Naive thymus-derived CD4-positive, alpha-beta T cell (primary cell): ENCODE measurements at regions of chr21 and their contacts with region 1.

Region 1: DNA sequence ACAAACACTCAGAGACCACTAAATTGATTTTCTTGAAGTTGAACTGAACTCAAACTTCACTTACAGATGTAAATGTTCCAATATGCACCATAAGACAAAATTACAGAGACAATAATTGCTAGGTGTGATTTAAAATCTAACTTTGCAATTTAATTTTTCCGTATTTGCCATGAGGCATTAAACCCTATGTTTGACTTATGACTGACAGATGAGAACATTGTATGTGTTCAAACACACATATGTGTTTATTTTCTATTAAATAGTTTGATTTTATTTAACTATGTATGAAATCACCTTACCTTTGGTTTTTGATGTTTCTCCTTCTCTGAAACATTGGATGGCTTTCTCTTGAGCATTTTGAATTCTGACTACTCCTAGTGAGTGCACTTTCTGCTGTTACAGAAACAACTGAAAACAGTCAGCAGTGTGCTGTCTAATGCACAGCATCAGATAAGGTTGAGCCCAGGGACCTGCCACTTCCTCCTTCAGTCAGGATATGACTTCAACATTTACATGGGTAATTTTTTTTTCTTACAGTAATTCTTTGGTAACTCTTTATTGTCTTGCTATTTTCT is at the start of gene SAMSN1:
- DNase-seq: peak in 8 of 9 donors; percentile 62 to 84 (median 78)
- ATAC-seq: peak; percentile 93
- H3K4me3 ChIP-seq: peak within 1 kb of the TSS; percentile 78
- H3K4me3 Mint-ChIP-seq: peak within 1 kb of the TSS; percentile 81 to 99 (median 93)
- H3K27ac ChIP-seq: peak within 1 kb of the TSS; percentile 82
- H3K27ac Mint-ChIP-seq: peak within 1 kb of the TSS; percentile 81 to 97 (median 93)
- H3K4me1 ChIP-seq: peaks cover 43 to 50% of the 10 kb centered on the region in 2 donors
- H3K4me1 Mint-ChIP-seq: peaks cover 31 to 79% (median 67%) of the 10 kb centered on the region in 7 donors
- H3K27me3 ChIP-seq: no peaks in the 10 kb centered on the region
- H3K27me3 Mint-ChIP-seq: no peaks in the 10 kb centered on the region
- total RNA-seq, gene SAMSN1: 27.5 to 136 (median 38.0) TPM

Region 2: DNA sequence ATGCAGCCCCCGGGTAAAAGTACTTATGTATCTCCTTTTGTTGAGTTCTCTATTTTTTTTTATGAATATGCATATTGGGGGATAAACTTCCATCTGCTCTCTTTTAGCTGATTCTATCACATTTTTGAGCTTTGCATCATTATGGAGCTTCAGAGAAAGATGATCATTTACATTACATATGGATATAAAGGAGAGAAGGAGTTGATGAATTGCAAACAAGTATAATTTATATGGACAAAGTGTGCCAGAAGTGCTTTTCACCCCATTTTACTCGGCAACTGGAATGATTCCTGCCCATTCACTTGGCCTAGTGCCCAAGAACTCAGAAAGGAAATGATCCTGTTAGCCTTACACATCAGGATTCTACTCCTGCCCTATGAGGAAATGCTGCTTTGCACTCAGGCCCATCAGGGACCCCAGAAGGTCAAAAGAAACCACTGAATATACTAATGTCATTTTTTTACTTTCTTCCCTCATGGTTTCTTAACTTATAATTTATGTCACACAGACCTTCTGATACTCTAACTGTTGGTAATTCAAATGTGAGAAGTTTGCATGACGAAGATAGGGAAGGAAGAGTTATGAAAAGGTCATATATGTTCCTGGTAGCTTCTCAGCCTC is 65.5 kb before region 1 on chr21:
- CTCF ChIA-PET with region 1: no interaction called
- POLR2A ChIA-PET with region 1: no interaction called
- intact Hi-C with region 1: no loop called
- DNase-seq: no peak
- ATAC-seq: peak; percentile 29
- H3K4me3 ChIP-seq: no peak overlapping the region
- H3K4me3 Mint-ChIP-seq: no peak overlapping the region
- H3K27ac ChIP-seq: no peak overlapping the region
- H3K27ac Mint-ChIP-seq: peak overlapping the region in 2 of 9 donors; percentile 21 to 90
- H3K4me1 ChIP-seq: peaks cover 0 to 13% of the 10 kb centered on the region in 2 donors
- H3K4me1 Mint-ChIP-seq: peaks cover 8 to 53% (median 15%) of the 10 kb centered on the region in 7 donors
- H3K27me3 ChIP-seq: no peaks in the 10 kb centered on the region
- H3K27me3 Mint-ChIP-seq: no peaks in the 10 kb centered on the region

Region 3: GRCh38 chr21:14492931-14493330 is 53.1 kb before region 1 on chr21:
- CTCF ChIA-PET with region 1: no interaction called
- POLR2A ChIA-PET with region 1: no interaction called
- intact Hi-C with region 1: loop called in 1 of 2 experiments (anchors 2 kb)
- DNase-seq: no peak
- ATAC-seq: no peak
- H3K4me3 ChIP-seq: no peak overlapping the region
- H3K4me3 Mint-ChIP-seq: no peak overlapping the region
- H3K27ac ChIP-seq: no peak overlapping the region
- H3K27ac Mint-ChIP-seq: peak overlapping the region in 2 of 9 donors; percentile 5 to 18
- H3K4me1 ChIP-seq: no peaks in the 10 kb centered on the region
- H3K4me1 Mint-ChIP-seq: peaks cover 7 to 57% (median 16%) of the 10 kb centered on the region in 7 donors
- H3K27me3 ChIP-seq: no peaks in the 10 kb centered on the region
- H3K27me3 Mint-ChIP-seq: no peaks in the 10 kb centered on the region

Region 4: DNA sequence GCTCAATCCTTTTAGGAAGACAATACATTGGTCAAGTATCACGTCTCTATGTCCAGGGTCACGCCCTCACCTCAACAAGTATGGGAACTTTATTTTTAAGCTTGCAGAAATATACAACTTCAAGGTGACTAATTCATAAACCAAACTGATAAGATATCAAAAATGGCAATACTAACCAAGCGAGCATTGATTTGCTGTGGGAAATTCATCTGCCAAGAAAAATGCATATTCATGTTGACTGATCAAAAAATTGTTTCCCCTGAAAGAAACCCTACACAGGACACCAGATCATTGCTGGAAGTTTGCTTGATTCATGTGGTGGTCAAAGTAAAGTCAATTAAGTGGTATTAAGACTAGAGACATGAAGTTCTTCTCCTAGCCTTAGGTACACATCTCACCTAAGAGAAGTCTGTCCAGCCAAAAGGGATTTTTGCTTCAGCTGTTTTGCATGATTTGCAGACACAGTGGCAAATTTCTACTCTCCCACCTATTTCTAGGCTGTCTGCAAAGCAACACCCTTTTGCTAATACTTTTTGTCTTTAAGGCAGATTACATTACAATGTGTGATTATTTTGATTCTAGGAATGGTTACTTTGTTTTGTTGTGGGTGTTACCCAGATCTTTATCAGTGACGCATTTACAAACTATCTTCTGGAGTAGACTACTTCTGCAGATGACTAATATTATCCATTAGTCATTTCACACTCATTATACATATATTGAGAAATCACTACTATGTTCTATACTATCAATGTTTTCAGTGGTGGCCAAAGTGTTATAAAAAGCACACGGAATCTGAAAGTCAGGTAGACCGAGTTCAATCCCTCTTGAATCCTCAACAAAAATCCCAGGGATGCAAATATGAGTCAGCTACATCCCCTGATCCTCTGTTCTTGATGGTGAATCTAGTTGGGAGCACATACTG is 12.2 kb before region 1 on chr21:
- CTCF ChIA-PET with region 1: interaction called, 8 read pairs
- POLR2A ChIA-PET with region 1: interaction called, 6 read pairs
- intact Hi-C with region 1: loop called (anchors 1 kb)
- DNase-seq: peak in 3 of 9 donors; percentile 15 to 49 (median 22)
- ATAC-seq: peak; percentile 88
- H3K4me3 ChIP-seq: peak overlapping the region; percentile 22
- H3K4me3 Mint-ChIP-seq: peak overlapping the region in 8 of 10 donors; percentile 3 to 85 (median 47)
- H3K27ac ChIP-seq: no peak overlapping the region
- H3K27ac Mint-ChIP-seq: peak overlapping the region in 8 of 9 donors; percentile 25 to 95 (median 82)
- H3K4me1 ChIP-seq: peaks cover 10 to 30% of the 10 kb centered on the region in 2 donors
- H3K4me1 Mint-ChIP-seq: peaks cover 37 to 81% (median 67%) of the 10 kb centered on the region in 7 donors
- H3K27me3 ChIP-seq: no peaks in the 10 kb centered on the region
- H3K27me3 Mint-ChIP-seq: no peaks in the 10 kb centered on the region

Region 5: GRCh38 chr21:14581902-14582457 is 36.0 kb after region 1 on chr21:
- CTCF ChIA-PET with region 1: interaction called, 3 read pairs
- POLR2A ChIA-PET with region 1: no interaction called
- intact Hi-C with region 1: loop called (anchors 2 to 5 kb)
- DNase-seq: peak in 2 of 9 donors; percentile 4 to 21
- ATAC-seq: peak; percentile 64
- H3K4me3 ChIP-seq: no peak overlapping the region
- H3K4me3 Mint-ChIP-seq: peak overlapping the region; percentile 0 to 72 (median 25)
- H3K27ac ChIP-seq: no peak overlapping the region
- H3K27ac Mint-ChIP-seq: peak overlapping the region in 2 of 9 donors; percentile 5 to 74
- H3K4me1 ChIP-seq: no peaks in the 10 kb centered on the region
- H3K4me1 Mint-ChIP-seq: peaks cover 0 to 31% (median 5%) of the 10 kb centered on the region in 7 donors
- H3K27me3 ChIP-seq: no peaks in the 10 kb centered on the region
- H3K27me3 Mint-ChIP-seq: no peaks in the 10 kb centered on the region

Region 6: GRCh38 chr21:14630556-14631069 is 84.6 kb after region 1 on chr21:
- CTCF ChIA-PET with region 1: no interaction called
- POLR2A ChIA-PET with region 1: no interaction called
- intact Hi-C with region 1: loop called in 1 of 2 experiments (anchors 2 kb)
- DNase-seq: peak in 2 of 9 donors; percentile 7 to 10
- ATAC-seq: peak; percentile 41
- H3K4me3 ChIP-seq: no peak overlapping the region
- H3K4me3 Mint-ChIP-seq: peak overlapping the region in 3 of 10 donors; percentile 11 to 30 (median 12)
- H3K27ac ChIP-seq: no peak overlapping the region
- H3K27ac Mint-ChIP-seq: peak overlapping the region in 6 of 9 donors; percentile 20 to 72 (median 46)
- H3K4me1 ChIP-seq: no peaks in the 10 kb centered on the region
- H3K4me1 Mint-ChIP-seq: peaks cover 7 to 34% (median 18%) of the 10 kb centered on the region in 7 donors
- H3K27me3 ChIP-seq: no peaks in the 10 kb centered on the region
- H3K27me3 Mint-ChIP-seq: peaks cover 0 to 7% (median 0%) of the 10 kb centered on the region in 5 donors

Region 7: DNA sequence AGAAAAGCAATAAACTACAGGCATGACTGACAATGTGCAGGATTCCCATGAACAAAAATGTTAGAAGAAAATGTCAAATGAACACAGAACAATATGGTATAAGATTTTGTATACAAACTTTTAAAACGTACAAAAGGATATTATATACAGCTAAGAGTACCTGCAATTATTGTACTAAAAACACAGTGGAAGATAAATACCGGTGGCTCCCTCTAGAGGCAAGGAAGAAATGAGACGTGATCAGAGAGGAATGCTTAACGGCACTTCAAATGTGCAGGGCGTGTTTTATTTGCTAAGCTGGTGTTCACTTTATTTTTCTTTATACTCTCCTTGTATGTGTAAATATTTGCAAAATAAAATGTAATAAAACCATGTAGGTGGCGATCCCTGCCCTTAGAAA is 191.9 kb after region 1 on chr21:
- CTCF ChIA-PET with region 1: interaction called, 3 read pairs
- POLR2A ChIA-PET with region 1: no interaction called
- intact Hi-C with region 1: loop called in 1 of 2 experiments (anchors 2 kb)
- DNase-seq: peak in 7 of 9 donors; percentile 54 to 80 (median 72)
- ATAC-seq: peak; percentile 94
- H3K4me3 ChIP-seq: no peak overlapping the region
- H3K4me3 Mint-ChIP-seq: peak overlapping the region in 1 of 10 donors; percentile 23
- H3K27ac ChIP-seq: no peak overlapping the region
- H3K27ac Mint-ChIP-seq: peak overlapping the region in 1 of 9 donors; percentile 7
- H3K4me1 ChIP-seq: peaks cover 0 to 6% of the 10 kb centered on the region in 2 donors
- H3K4me1 Mint-ChIP-seq: peaks cover 0 to 43% (median 8%) of the 10 kb centered on the region in 7 donors
- H3K27me3 ChIP-seq: no peaks in the 10 kb centered on the region
- H3K27me3 Mint-ChIP-seq: peaks cover 0 to 5% (median 3%) of the 10 kb centered on the region in 5 donors